HepG2 (cell line): ENCODE measurements at regions of chr13 and their contacts with region 1.

Region 1: GRCh38 chr13:54241719-54242118 is 1213.1 kb downstream of the OLFM4 start:
- DNase-seq: no peak
- ATAC-seq: no peak
- H3K4me3 ChIP-seq: no peak overlapping the region
- H3K27ac ChIP-seq: no peak overlapping the region
- H3K4me1 ChIP-seq: no peaks in the 10 kb centered on the region
- H3K27me3 ChIP-seq: no peaks in the 10 kb centered on the region; a peak in 1 of 5 replicates
- CTCF ChIP-seq: no peak
- EP300 ChIP-seq: no peak
- POLR2A ChIP-seq: no peak
- RAD21 ChIP-seq: no peak

Region 2: DNA sequence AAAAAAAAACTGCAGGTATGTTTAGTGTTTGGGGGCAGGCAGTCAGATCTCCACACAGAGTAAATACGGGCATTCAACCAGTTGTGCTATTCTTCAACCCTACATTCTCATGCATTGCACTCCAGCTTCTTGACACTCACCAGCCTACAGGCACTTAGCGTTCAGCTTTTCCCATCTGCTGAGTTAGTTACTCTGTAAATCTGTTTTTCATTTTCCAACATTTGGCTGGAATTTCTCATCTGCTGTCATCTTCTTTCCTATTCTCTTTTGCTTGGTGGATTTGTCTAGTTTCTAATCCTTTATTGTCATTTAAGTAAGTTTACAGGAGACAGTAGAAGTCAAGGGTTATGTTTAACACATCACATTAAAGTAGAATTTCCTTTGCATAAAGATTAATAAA is 105.8 kb after region 1 on chr13:
- CTCF ChIA-PET with region 1: no interaction called
- POLR2A ChIA-PET with region 1: no interaction called
- in situ Hi-C with region 1: loop called (anchors 25 kb)
- intact Hi-C with region 1: no loop called
- DNase-seq: no peak
- ATAC-seq: no peak
- H3K4me3 ChIP-seq: no peak overlapping the region
- H3K27ac ChIP-seq: no peak overlapping the region
- H3K4me1 ChIP-seq: no peaks in the 10 kb centered on the region
- H3K27me3 ChIP-seq: no peaks in the 10 kb centered on the region
- CTCF ChIP-seq: no peak
- EP300 ChIP-seq: no peak
- POLR2A ChIP-seq: no peak
- RAD21 ChIP-seq: no peak